Ascending aorta (tissue), 2 donors: ENCODE measurements at regions of chr12 and their contacts with region 1.

Region 1: GRCh38 chr12:47032644-47033043 is 46.8 kb upstream of the PCED1B start:
- DNase-seq: no peak
- H3K4me3 ChIP-seq: no peak overlapping the region
- H3K27ac ChIP-seq: no peak overlapping the region
- H3K4me1 ChIP-seq: peaks cover 0 to 5% of the 10 kb centered on the region in 2 donors
- H3K27me3 ChIP-seq: no peaks in the 10 kb centered on the region
- CTCF ChIP-seq: peak; percentile 52 to 69 (median 64)

Region 2: GRCh38 chr12:47102845-47103651 is 70.4 kb after region 1 on chr12:
- intact Hi-C with region 1: no loop called
- DNase-seq: no peak
- H3K4me3 ChIP-seq: peak overlapping the region in 1 of 2 donors; percentile 10
- H3K27ac ChIP-seq: peak overlapping the region; percentile 75 to 87
- H3K4me1 ChIP-seq: peaks cover 0 to 34% of the 10 kb centered on the region in 2 donors
- H3K27me3 ChIP-seq: no peaks in the 10 kb centered on the region
- CTCF ChIP-seq: no peak

Region 3: DNA sequence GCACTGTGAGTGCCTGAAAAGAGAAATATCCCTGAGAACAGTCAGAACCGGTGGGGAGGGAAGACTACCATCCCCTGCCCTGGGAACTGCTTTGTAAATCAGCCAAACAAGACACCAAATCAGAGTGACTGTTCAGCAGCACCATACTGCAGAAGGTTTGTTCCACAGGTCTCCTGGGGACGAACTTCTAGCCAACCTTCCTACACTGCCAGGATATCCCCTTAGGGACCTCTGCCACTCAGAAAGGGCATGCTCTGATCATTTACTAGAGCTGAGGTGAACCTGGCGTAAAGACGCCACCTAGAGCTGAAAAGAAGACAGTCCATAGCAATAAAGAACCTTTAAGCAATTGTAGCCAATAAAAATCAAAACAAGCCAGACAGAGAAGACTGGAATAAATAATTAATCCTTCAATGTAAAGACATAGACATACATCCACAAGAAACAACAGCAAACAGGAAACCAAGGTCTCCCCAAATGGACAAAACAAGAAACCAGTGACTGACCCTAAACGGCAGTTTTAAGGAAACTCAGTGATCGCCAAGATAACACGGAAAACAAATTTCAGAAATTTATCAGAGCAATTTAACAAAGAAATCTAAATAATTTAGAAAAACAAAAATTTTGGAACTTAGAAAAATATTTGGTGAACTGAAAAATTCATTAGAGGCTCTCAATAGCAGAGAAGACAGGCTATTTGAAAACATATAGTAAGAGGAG is 275.2 kb after region 1 on chr12:
- intact Hi-C with region 1: loop called (anchors 5 kb)
- DNase-seq: no peak
- H3K4me3 ChIP-seq: no peak overlapping the region
- H3K27ac ChIP-seq: no peak overlapping the region
- H3K4me1 ChIP-seq: no peaks in the 10 kb centered on the region
- H3K27me3 ChIP-seq: no peaks in the 10 kb centered on the region
- CTCF ChIP-seq: peak; percentile 34 to 43 (median 38)

Region 4: DNA sequence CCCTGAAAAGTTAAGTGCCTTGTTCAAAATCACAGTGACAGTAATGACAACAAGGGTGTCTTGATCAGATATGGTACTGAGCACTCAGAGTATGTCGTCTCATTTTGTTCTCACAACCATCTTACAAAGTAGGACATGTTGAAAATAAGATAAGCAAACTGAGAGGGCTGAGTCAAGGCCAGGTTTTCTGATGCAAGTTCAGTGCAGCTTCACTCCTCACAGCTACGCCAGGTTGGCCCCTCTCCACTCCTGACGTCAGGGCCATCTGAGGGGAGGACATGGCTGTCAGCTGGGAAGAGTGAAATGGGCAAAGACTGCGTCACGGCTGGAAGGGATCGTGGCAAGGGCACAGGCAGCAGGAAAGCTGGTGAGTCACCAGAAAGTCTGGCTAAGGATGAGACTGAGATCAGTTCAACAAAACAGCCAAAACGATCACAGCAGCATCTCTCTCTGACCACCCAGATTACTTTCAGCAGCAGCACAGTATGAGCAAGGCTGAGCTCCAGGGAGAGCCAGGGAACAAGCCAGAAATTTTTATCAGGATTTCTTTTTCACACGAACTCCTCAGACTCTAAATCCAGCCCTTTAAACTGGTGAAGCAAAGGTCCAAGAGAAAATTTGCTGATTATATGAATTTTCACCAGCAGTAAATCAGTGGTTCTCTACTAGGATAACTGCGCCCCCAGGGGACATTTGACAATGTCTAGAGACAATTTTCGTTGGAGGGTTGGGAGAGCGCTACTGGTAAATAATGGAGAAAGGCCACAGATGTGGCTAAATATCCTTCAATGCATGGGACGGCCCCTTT is 345.0 kb after region 1 on chr12:
- intact Hi-C with region 1: loop called (anchors 5 kb)
- DNase-seq: peak; percentile 95 to 99
- H3K4me3 ChIP-seq: peak overlapping the region in 1 of 2 donors; percentile 23
- H3K27ac ChIP-seq: peak overlapping the region; percentile 85 to 91
- H3K4me1 ChIP-seq: peaks cover 0 to 13% of the 10 kb centered on the region in 2 donors
- H3K27me3 ChIP-seq: no peaks in the 10 kb centered on the region
- CTCF ChIP-seq: no peak

Region 5: DNA sequence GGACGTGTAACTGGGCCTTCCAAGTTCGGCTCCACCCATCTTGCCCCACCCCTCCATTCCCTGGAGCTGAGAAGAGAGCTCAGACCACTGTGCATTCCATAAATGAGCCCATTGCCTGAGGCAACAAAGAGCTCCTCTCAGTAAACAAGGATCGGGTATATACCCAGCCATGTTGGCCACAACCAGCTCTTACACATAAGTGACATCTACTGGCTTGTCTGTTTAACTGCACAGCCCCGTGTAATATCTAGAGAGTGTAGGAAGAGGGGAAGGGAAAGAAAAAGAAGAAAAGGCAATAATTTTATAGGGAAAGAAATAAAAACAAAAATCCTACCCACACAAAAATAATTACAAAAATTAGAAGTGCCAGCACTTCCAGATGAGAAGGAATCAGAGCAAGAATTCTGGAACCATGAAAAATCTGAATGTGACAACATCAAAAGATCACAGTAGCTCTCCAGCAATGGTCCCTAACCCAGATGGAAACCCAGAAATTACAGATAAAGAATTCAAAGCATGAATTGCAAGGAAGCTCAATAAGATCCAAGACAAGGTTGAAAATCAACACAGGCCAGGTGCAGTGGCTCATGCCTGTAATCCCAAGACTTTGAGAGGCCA is 365.1 kb after region 1 on chr12:
- intact Hi-C with region 1: loop called (anchors 5 kb)
- DNase-seq: no peak
- H3K4me3 ChIP-seq: no peak overlapping the region
- H3K27ac ChIP-seq: no peak overlapping the region
- H3K4me1 ChIP-seq: peaks cover 0 to 5% of the 10 kb centered on the region in 2 donors
- H3K27me3 ChIP-seq: no peaks in the 10 kb centered on the region
- CTCF ChIP-seq: peak in 2 of 3 experiments; percentile 29 to 35

Region 6: DNA sequence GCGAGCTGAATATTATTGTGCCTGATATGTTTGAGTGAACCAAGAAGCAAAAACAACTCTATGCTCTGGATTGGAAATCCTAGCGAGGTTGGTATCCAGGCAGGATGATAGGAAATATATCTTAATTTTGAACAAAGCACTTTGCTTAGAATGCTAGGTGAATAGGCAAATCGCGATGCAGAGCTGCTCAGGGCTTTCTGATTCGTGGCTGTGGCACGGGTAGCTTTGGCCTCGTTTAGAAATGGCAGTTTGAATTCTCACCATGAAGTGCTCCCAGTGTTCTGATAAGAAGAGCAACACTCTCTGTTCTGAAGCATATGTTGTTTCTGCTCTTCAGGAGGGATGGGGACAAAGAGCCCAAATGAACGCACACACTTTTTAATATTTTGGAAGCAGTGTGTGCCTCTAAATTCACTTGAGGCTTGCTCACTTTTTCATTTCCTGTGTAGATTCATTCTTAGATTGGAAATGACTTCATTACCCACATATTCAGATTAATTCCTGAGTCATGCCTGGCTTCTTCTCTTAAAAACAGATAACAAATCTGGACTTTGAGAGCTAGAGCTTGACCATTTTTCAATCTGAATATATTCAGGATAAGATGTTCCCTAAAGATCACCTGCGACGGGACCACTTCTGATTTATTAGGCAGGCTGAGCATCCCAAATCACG is 472.3 kb after region 1 on chr12:
- intact Hi-C with region 1: loop called (anchors 10 kb)
- DNase-seq: no peak
- H3K4me3 ChIP-seq: peak overlapping the region in 1 of 2 donors; percentile 36
- H3K27ac ChIP-seq: peak overlapping the region; percentile 76 to 82
- H3K4me1 ChIP-seq: peaks cover 0 to 12% of the 10 kb centered on the region in 2 donors
- H3K27me3 ChIP-seq: no peaks in the 10 kb centered on the region
- CTCF ChIP-seq: no peak

Region 7: DNA sequence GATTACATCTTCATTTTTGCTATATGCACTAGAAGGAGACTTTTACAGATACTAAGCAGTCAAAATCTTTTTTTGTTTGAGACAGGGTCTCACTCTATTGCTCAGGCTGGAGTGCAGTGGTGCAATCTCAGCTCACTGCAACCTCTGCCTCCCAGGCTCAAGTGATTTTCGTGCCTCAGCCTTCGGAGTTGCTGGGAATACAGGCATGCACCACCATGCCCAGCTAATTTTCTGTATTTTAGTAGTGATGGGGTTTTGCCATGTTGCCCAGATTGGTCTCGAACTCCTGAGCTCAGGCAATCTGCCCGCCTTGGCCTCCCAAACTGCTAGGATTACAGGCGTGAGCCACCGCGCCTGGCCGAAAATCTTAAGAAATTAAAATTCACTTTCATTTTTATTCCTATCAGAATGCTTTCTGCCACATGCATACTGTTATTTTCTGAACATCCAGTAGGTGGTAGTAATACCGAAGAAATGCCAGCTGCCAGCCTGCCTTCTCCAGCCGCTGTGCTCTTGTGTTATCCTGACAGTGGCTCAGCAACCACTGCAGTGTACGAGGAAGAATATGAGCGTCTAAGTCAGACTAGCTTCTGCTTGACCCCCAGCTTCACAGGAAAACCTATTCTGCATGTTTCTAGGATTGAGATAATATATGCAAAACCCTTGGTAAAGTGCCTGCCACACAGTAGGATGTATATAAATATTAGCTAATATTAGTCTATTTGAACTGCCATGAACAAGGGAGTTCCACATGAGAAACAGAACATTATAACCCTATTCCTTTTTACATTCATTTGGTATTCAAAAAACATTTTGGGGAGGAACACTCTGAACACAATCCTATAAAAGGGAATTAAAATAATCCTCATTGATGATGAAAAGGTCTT is 619.0 kb after region 1 on chr12:
- intact Hi-C with region 1: loop called (anchors 10 kb)
- DNase-seq: peak in 1 of 2 donors; percentile 72
- H3K4me3 ChIP-seq: peak overlapping the region in 1 of 2 donors; percentile 48
- H3K27ac ChIP-seq: peak overlapping the region; percentile 6 to 29
- H3K4me1 ChIP-seq: peaks cover 0 to 2% of the 10 kb centered on the region in 2 donors
- H3K27me3 ChIP-seq: no peaks in the 10 kb centered on the region
- CTCF ChIP-seq: peak; percentile 66 to 86 (median 74)

Region 8: DNA sequence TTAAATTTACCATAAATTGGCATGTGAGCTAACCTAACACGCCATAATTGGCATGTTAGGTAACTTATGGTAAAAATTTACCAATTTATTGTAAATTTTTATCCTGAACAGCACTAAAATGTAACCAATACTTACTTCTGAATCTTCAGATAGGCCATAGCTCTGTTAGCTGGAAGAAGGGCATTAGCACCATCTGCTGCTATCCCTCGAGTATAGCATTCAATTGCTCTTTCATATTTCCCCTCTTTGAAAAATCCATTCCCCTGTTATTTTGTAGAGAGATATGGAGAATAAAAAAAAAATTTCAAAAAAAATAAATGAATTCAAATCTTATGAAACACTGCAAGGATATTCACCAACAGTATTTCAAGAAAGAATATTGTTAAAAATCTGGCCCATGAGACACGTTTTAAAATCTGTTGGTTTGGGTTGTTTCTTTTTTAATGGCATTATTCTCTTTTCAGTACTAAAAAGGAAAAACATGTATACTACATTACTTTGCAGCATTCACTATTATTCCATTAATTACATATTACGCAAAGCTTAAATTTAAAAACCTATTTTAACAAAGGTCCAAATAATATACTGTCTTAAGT is 654.1 kb after region 1 on chr12:
- intact Hi-C with region 1: loop called (anchors 2 kb)
- DNase-seq: no peak
- H3K4me3 ChIP-seq: no peak overlapping the region
- H3K27ac ChIP-seq: no peak overlapping the region
- H3K4me1 ChIP-seq: no peaks in the 10 kb centered on the region
- H3K27me3 ChIP-seq: no peaks in the 10 kb centered on the region
- CTCF ChIP-seq: peak; percentile 44 to 64 (median 47)